ENCODE measurements at regions of chr19 and their contacts with region 1.

Region 1: GRCh38 chr19:6737284-6738046 is at the start of gene GPR108:
- DNase-seq: peak; percentile 99
- H3K4me3 ChIP-seq: peak within 1 kb of the TSS; percentile 81
- H3K4me3 Mint-ChIP-seq: peak within 1 kb of the TSS; percentile 78
- H3K27ac Mint-ChIP-seq: peak within 1 kb of the TSS; percentile 99
- H3K4me1 ChIP-seq: peaks cover 20% of the 10 kb centered on the region
- H3K4me1 Mint-ChIP-seq: peaks cover 17% of the 10 kb centered on the region
- H3K27me3 ChIP-seq: no peaks in the 10 kb centered on the region
- H3K27me3 Mint-ChIP-seq: no peaks in the 10 kb centered on the region
- CTCF ChIP-seq: no peak
- total RNA-seq, gene GPR108: 48.9 and 53.6 TPM in 2 replicates

Region 2: GRCh38 chr19:6516659-6517291 is 220.7 kb before region 1 on chr19:
- CTCF ChIA-PET with region 1: interaction called, 11 read pairs
- POLR2A ChIA-PET with region 1: no interaction called
- intact Hi-C with region 1: loop called (anchors 1 kb)
- DNase-seq: peak; percentile 87 to 93
- H3K4me3 ChIP-seq: peak overlapping the region; percentile 65
- H3K4me3 Mint-ChIP-seq: peak overlapping the region; percentile 90
- H3K27ac Mint-ChIP-seq: peak overlapping the region; percentile 42
- H3K4me1 ChIP-seq: peaks cover 28% of the 10 kb centered on the region
- H3K4me1 Mint-ChIP-seq: peaks cover 21% of the 10 kb centered on the region
- H3K27me3 ChIP-seq: no peaks in the 10 kb centered on the region
- H3K27me3 Mint-ChIP-seq: no peaks in the 10 kb centered on the region
- CTCF ChIP-seq: peak; percentile 92 to 94

Region 3: GRCh38 chr19:6632002-6632621 is 105.4 kb before region 1 on chr19:
- CTCF ChIA-PET with region 1: no interaction called
- POLR2A ChIA-PET with region 1: no interaction called
- intact Hi-C with region 1: loop called (anchors 1 kb)
- DNase-seq: peak; percentile 68 to 80
- H3K4me3 ChIP-seq: no peak overlapping the region
- H3K4me3 Mint-ChIP-seq: no peak overlapping the region
- H3K27ac Mint-ChIP-seq: no peak overlapping the region
- H3K4me1 ChIP-seq: no peaks in the 10 kb centered on the region
- H3K4me1 Mint-ChIP-seq: peaks cover 6% of the 10 kb centered on the region
- H3K27me3 ChIP-seq: no peaks in the 10 kb centered on the region
- H3K27me3 Mint-ChIP-seq: no peaks in the 10 kb centered on the region
- CTCF ChIP-seq: peak; percentile 76 to 84

Region 4: DNA sequence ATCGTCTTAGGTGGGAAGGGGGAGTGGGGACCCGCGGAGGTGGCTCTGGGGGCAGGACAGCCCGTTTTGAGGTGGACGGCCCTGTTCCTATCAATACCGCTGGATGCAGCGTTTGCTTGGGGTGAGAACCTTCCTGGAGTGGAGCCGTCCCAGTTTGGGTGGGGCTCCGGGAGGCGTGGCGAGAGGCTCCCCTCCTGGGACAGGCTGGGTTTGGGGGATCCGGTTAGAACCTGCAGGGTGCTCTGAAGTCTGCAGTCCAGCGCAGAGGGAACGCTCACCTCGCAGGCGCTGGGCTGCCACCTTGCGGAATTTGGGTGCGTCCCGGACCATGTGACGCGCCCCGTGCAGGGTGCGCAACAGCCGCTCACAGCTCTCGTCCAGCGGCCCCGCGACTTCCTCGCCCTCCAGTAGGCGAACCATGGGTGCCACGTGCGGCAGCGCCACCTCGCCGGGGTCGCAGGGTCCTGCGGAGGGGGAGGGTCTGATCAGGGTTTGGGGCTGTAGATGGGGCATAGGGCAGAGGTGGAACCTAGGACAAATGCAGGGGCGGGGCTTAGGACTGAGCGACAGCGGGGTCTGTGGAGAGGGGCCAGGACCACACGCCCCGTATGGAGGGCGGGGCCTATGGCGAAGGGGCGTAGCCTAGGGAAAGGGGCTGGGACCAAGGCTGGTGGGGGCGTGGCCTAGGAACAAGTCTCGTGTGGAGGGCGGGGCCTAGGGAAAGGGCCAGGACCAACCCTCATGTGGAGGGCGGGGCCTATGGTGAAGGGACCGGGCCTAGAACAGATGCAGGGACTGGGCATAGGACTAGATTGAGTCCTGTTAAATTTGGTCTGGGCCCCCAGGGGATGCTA is 15.9 kb after region 1 on chr19:
- CTCF ChIA-PET with region 1: interaction called, 29 read pairs
- POLR2A ChIA-PET with region 1: interaction called, 27 read pairs
- intact Hi-C with region 1: loop called (anchors 1 kb)
- DNase-seq: peak; percentile 97
- H3K4me3 ChIP-seq: peak overlapping the region; percentile 53
- H3K4me3 Mint-ChIP-seq: peak overlapping the region; percentile 94
- H3K27ac Mint-ChIP-seq: peak overlapping the region; percentile 98
- H3K4me1 ChIP-seq: peaks cover 18% of the 10 kb centered on the region; the same call in 1 of the 2 replicates
- H3K4me1 Mint-ChIP-seq: peaks cover 6% of the 10 kb centered on the region
- H3K27me3 ChIP-seq: no peaks in the 10 kb centered on the region
- H3K27me3 Mint-ChIP-seq: no peaks in the 10 kb centered on the region
- CTCF ChIP-seq: peak; percentile 40 to 45

Region 5: DNA sequence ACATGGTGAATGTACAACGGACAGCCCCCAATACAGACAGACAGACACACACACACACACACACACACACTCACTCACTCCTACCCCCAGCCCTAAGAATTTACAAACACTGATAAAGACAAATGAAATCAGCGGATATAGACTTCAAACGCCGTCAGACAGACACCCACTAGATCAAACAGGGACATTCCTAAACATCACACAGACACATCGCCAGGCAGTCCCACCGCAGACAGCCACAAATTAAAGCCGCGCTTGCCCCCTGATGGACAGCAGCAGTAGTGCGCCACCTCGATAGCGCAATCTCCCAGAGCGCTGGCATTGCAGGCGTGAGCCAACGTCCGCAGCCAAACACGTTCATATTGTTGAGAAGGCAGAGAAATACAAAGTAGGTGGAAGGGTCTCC is 125.2 kb after region 1 on chr19:
- CTCF ChIA-PET with region 1: interaction called, 27 read pairs
- POLR2A ChIA-PET with region 1: no interaction called
- intact Hi-C with region 1: no loop called
- DNase-seq: peak; percentile 85 to 87
- H3K4me3 ChIP-seq: peak overlapping the region; percentile 24
- H3K4me3 Mint-ChIP-seq: peak overlapping the region; percentile 65
- H3K27ac Mint-ChIP-seq: no peak overlapping the region
- H3K4me1 ChIP-seq: no peaks in the 10 kb centered on the region
- H3K4me1 Mint-ChIP-seq: peaks cover 6% of the 10 kb centered on the region
- H3K27me3 ChIP-seq: no peaks in the 10 kb centered on the region
- H3K27me3 Mint-ChIP-seq: peaks cover 3% of the 10 kb centered on the region
- CTCF ChIP-seq: peak; percentile 82 to 88